Right ventricle myocardium inferior (tissue), 1 donor: ENCODE measurements at regions of chr4 and their contacts with region 1.

Region 1: DNA sequence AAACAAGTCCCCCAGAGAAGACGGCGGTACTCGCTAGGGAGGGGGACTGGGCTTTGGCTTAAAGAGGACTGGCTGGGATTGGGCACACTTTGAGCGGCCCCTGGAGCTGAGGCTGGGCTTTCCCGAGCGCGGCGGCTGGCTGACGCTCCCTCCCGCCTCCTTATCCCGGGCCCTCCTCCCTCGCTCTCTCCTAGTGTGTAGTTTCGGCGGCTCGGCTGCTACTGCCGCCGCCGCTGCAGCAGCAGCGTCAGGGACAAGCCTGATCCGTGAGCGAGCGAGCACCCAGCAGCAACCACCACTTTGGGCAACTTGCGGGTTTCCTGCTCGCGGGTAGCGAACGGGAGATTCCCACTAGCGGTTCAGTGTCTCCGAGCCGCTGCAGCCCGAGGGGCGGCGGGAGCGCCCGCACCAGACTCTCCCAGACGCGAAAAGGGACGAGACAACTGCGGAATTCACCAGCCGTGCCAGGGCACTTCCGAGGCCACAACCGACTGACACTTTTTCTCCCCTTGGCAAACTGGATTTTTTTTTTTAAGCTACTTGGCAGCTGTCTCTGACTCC is 629 bp upstream of the PCDH7 start:
- DNase-seq: peak; percentile 72
- ATAC-seq: peak; percentile 69

Region 2: GRCh38 chr4:30948653-30949052 is 229.1 kb after region 1 on chr4:
- intact Hi-C with region 1: loop called (anchors 10 kb)
- DNase-seq: no peak
- ATAC-seq: no peak